ENCODE measurements at regions of chr1 and their contacts with region 1.

Region 1: GRCh38 chr1:15820478-15820877 is 13.0 kb upstream of the UQCRHL start:
- DNase-seq: no peak
- H3K4me3 ChIP-seq: no peak overlapping the region
- H3K4me3 Mint-ChIP-seq: no peak overlapping the region
- H3K27ac ChIP-seq: no peak overlapping the region
- H3K27ac Mint-ChIP-seq: peak overlapping the region in 1 of 7 donors; percentile 37
- H3K4me1 ChIP-seq: peaks cover 8% of the 10 kb centered on the region
- H3K4me1 Mint-ChIP-seq: peaks cover 3 to 5% (median 4%) of the 10 kb centered on the region in 4 donors
- H3K27me3 ChIP-seq: no peaks in the 10 kb centered on the region
- H3K27me3 Mint-ChIP-seq: peaks cover 0 to 3% of the 10 kb centered on the region in 2 donors

Region 2: GRCh38 chr1:14634486-14634885 is 1186.0 kb before region 1 on chr1:
- CTCF ChIA-PET with region 1: no interaction called
- POLR2A ChIA-PET with region 1: no interaction called
- intact Hi-C with region 1: no loop called
- DNase-seq: no peak
- H3K4me3 ChIP-seq: no peak overlapping the region
- H3K4me3 Mint-ChIP-seq: no peak overlapping the region
- H3K27ac ChIP-seq: no peak overlapping the region
- H3K27ac Mint-ChIP-seq: no peak overlapping the region
- H3K4me1 ChIP-seq: no peaks in the 10 kb centered on the region
- H3K4me1 Mint-ChIP-seq: no peaks in the 10 kb centered on the region
- H3K27me3 ChIP-seq: no peaks in the 10 kb centered on the region
- H3K27me3 Mint-ChIP-seq: no peaks in the 10 kb centered on the region

Region 3: GRCh38 chr1:15835741-15836510 is 15.4 kb after region 1 on chr1:
- CTCF ChIA-PET with region 1: interaction called, 29 read pairs
- POLR2A ChIA-PET with region 1: interaction called, 18 read pairs
- intact Hi-C with region 1: loop called (anchors 2 kb)
- DNase-seq: peak; percentile 97 to 99 (median 99)
- H3K4me3 ChIP-seq: peak overlapping the region; percentile 86 to 88
- H3K4me3 Mint-ChIP-seq: peak overlapping the region; percentile 92 to 98 (median 96)
- H3K27ac ChIP-seq: peak overlapping the region; percentile 99
- H3K27ac Mint-ChIP-seq: peak overlapping the region; percentile 98 to 100 (median 99)
- H3K4me1 ChIP-seq: peaks cover 16% of the 10 kb centered on the region
- H3K4me1 Mint-ChIP-seq: peaks cover 8 to 47% (median 14%) of the 10 kb centered on the region in 4 donors
- H3K27me3 ChIP-seq: no peaks in the 10 kb centered on the region
- H3K27me3 Mint-ChIP-seq: no peaks in the 10 kb centered on the region

Region 4: GRCh38 chr1:15870421-15870820 is 49.9 kb after region 1 on chr1:
- CTCF ChIA-PET with region 1: interaction called, 13 read pairs
- POLR2A ChIA-PET with region 1: interaction called, 3 read pairs
- intact Hi-C with region 1: no loop called
- DNase-seq: no peak
- H3K4me3 ChIP-seq: no peak overlapping the region
- H3K4me3 Mint-ChIP-seq: peak overlapping the region in 2 of 8 donors; percentile 17 to 21
- H3K27ac ChIP-seq: no peak overlapping the region
- H3K27ac Mint-ChIP-seq: peak overlapping the region in 5 of 7 donors; percentile 3 to 62 (median 32)
- H3K4me1 ChIP-seq: peaks cover 27% of the 10 kb centered on the region
- H3K4me1 Mint-ChIP-seq: peaks cover 37 to 72% (median 59%) of the 10 kb centered on the region in 4 donors
- H3K27me3 ChIP-seq: no peaks in the 10 kb centered on the region
- H3K27me3 Mint-ChIP-seq: no peaks in the 10 kb centered on the region

Region 5: GRCh38 chr1:15902882-15903281 is 82.4 kb after region 1 on chr1:
- CTCF ChIA-PET with region 1: interaction called, 13 read pairs
- POLR2A ChIA-PET with region 1: interaction called, 4 read pairs
- intact Hi-C with region 1: no loop called
- DNase-seq: no peak
- H3K4me3 ChIP-seq: no peak overlapping the region
- H3K4me3 Mint-ChIP-seq: no peak overlapping the region
- H3K27ac ChIP-seq: no peak overlapping the region
- H3K27ac Mint-ChIP-seq: peak overlapping the region in 2 of 7 donors; percentile 35 to 53
- H3K4me1 ChIP-seq: peaks cover 8% of the 10 kb centered on the region
- H3K4me1 Mint-ChIP-seq: peaks cover 25 to 30% (median 25%) of the 10 kb centered on the region in 4 donors
- H3K27me3 ChIP-seq: no peaks in the 10 kb centered on the region
- H3K27me3 Mint-ChIP-seq: no peaks in the 10 kb centered on the region

Region 6: DNA sequence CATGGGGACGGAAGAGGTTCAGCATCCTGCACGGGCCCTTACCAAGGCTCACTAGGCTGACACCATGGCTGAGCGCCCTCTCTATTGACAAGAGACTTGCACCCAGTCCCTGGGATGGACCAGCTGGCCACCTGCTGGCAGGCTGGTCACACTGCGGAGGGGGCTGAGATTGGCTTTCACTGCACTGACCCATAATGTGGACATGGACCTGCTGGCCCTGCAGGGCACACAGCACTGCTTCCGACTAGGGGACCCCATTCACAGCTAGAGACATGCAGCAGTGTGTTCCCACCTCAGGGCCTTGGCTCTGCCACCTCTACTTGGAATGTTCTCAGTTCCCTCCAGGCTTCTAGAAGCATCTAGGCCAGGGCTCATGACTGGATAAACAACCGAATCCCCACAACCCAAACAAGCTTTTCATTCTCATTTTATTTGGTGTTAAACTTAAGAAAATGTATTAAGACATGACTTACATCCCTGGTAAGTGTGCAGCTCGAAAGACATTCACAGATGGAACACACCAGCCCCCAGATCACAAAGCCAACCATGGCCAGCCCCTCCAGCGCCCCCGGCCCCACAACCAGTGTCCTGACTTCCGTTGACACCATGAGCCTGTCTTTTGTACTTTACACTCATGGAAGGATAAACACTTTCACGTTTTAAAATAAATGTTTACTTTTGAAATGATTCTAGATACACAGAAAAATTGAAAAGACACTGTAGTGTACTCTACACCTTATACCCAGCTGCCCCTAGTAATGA is 174.3 kb after region 1 on chr1:
- CTCF ChIA-PET with region 1: interaction called, 17 read pairs
- POLR2A ChIA-PET with region 1: no interaction called
- intact Hi-C with region 1: loop called (anchors 1 kb)
- DNase-seq: peak in 3 of 5 donors; percentile 26 to 50 (median 32)
- H3K4me3 ChIP-seq: no peak overlapping the region
- H3K4me3 Mint-ChIP-seq: no peak overlapping the region
- H3K27ac ChIP-seq: no peak overlapping the region
- H3K27ac Mint-ChIP-seq: peak overlapping the region in 2 of 7 donors; percentile 10 to 61
- H3K4me1 ChIP-seq: no peaks in the 10 kb centered on the region
- H3K4me1 Mint-ChIP-seq: no peaks in the 10 kb centered on the region
- H3K27me3 ChIP-seq: no peaks in the 10 kb centered on the region
- H3K27me3 Mint-ChIP-seq: peaks cover 0 to 2% of the 10 kb centered on the region in 2 donors

Measured in CD4-positive, alpha-beta memory T cell (primary cell).